HepG2 (cell line): ENCODE measurements at regions of chrX and their contacts with region 1.

Region 1: DNA sequence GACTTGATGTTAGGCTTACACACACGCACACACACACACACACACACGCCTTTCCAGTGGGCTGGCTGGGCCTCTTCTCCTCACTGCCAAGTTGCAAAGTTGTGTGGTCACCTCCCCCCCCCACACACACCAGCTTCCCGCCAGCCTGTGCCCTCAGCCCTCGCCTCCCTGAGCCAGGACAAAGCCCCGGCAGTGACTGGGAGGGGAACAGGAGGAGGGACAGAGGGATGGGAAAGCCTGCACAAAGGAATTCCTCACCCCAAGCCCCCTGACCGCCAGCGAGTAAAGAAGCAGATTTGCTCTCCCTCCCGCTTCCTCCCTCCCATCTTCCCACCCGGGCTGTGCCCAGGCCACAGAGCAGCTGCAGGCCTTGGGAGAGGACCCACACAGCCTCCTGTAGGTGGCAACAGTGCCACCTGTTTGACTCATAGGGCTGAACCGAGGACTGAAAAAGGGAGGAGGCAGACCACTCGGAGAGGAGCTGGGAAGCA is at the start of gene GDPD2:
- DNase-seq: peak; percentile 50
- ATAC-seq: peak; percentile 95
- H3K4me3 ChIP-seq: no peak within 1 kb of the TSS
- H3K27ac ChIP-seq: no peak within 1 kb of the TSS
- H3K4me1 ChIP-seq: peaks cover 18% of the 10 kb centered on the region
- H3K27me3 ChIP-seq: no peaks in the 10 kb centered on the region
- CTCF ChIP-seq: peak; percentile 74
- EP300 ChIP-seq: no peak
- POLR2A ChIP-seq: no peak
- RAD21 ChIP-seq: peak; percentile 37; the same call in 1 of the 2 replicates
- total RNA-seq, gene GDPD2: 0.04 TPM in 1 of 2 replicates, not detected in the other

Region 2: DNA sequence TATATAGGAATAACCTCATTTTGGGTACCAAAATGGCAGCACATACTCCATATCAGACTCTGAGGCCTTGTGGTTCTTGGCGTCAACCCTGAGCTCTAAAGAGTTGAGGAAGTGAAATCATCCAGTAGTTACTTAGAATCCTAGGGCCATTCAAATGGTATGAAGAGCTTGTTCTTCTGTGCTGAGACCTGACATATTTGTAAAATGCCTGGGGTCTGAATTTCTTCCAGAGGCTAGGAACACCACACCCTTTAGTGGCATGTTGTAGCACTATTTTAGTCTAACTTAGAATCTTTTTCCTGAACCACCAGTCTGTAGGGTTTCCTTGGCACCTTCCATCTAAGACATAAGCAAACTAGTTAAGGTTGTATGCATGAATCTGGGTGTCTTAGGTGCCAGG is 17.9 kb before region 1 on chrX:
- CTCF ChIA-PET with region 1: no interaction called
- POLR2A ChIA-PET with region 1: no interaction called
- in situ Hi-C with region 1: no loop called
- intact Hi-C with region 1: no loop called
- DNase-seq: no peak
- ATAC-seq: no peak
- H3K4me3 ChIP-seq: no peak overlapping the region
- H3K27ac ChIP-seq: no peak overlapping the region
- H3K4me1 ChIP-seq: no peaks in the 10 kb centered on the region
- H3K27me3 ChIP-seq: no peaks in the 10 kb centered on the region
- CTCF ChIP-seq: no peak
- EP300 ChIP-seq: no peak
- POLR2A ChIP-seq: no peak
- RAD21 ChIP-seq: no peak

Region 3: DNA sequence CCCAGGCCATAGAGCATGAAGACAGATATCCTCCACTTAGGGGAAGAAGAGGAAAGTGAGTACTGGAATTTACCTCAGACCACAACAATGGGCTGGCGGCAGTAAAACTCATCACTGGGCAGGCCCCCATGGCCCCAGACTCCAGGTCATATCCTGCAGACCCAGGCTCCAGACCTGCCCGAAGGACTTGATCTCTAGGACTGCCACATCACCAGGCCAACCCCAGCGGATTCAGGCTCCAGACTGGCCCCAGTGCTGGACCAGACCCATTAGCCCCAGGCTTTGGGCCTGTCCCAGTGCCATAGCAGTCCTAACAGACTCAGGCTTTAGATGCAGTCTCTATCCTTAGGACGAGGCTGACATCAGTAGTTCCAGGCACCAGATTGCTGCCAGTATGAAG is 212.3 kb after region 1 on chrX:
- CTCF ChIA-PET with region 1: no interaction called
- POLR2A ChIA-PET with region 1: no interaction called
- in situ Hi-C with region 1: no loop called
- intact Hi-C with region 1: no loop called
- DNase-seq: no peak
- ATAC-seq: no peak
- H3K4me3 ChIP-seq: no peak overlapping the region
- H3K27ac ChIP-seq: no peak overlapping the region
- H3K4me1 ChIP-seq: no peaks in the 10 kb centered on the region
- H3K27me3 ChIP-seq: no peaks in the 10 kb centered on the region
- CTCF ChIP-seq: no peak
- EP300 ChIP-seq: no peak
- POLR2A ChIP-seq: no peak
- RAD21 ChIP-seq: no peak

Region 4: DNA sequence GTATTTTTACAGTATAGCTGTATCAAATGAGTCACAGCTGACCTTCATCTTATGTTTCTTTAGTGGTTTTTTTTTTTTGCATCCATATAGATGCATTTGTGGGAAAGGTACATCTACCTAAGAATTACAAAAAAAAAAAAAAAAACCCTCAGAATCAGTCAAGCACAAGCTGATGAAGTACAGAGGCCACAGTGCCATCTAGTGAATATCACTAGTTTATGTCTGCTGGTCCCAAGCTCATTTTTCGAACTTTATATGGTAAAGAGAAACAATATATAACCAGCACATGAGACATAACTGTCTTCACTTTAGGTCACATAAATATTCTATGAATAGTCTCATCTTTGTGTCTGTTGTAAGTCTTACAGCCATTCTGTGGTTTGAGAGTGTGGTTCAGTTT is 241.8 kb after region 1 on chrX:
- CTCF ChIA-PET with region 1: interaction called, 6 read pairs
- POLR2A ChIA-PET with region 1: interaction called, 5 read pairs
- in situ Hi-C with region 1: no loop called
- intact Hi-C with region 1: loop called (anchors 10 kb)
- DNase-seq: peak; percentile 19
- ATAC-seq: 0 out of 3 replicates have a peak, but pooled peaks have one; percentile 43
- H3K4me3 ChIP-seq: no peak overlapping the region
- H3K27ac ChIP-seq: no peak overlapping the region
- H3K4me1 ChIP-seq: no peaks in the 10 kb centered on the region
- H3K27me3 ChIP-seq: no peaks in the 10 kb centered on the region
- CTCF ChIP-seq: peak; percentile 51
- EP300 ChIP-seq: no peak
- POLR2A ChIP-seq: no peak
- RAD21 ChIP-seq: no peak